Sigmoid colon (tissue), 7 donors: ENCODE measurements at regions of chr1 and their contacts with region 1.

Region 1: DNA sequence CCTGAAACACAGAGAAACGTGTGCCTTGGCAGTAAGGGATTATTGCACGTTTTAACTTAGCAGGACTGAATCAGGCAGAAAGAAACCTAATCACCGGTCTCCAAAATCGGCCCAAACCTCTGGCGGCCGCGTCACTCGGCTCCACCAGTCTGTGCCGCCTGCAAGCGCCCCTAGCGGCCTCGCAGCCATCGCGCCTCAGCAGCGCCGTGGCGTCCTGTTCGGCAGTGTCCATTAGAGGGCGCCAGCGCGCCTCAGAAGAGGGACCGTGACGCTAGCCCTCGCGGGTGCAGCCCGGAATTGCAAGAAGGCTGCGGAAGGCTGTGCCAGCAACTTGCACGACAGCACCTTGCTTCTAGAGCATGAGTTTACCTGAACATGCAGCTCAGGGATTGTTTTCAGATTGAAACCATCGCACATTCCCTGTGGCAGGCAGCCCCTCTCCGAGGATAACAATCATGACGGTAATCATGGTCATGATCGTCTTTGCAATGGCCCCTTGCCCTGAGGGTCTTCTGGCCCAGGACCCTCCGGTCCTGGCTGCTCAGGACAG is 164.4 kb downstream of the TRIM33 start:
- DNase-seq: peak; percentile 97
- H3K4me3 ChIP-seq: peak overlapping the region; percentile 38 to 53 (median 48)
- H3K27ac ChIP-seq: peak overlapping the region; percentile 82 to 85 (median 84)
- H3K4me1 ChIP-seq: peaks cover 0 to 13% (median 10%) of the 10 kb centered on the region in 4 donors
- H3K27me3 ChIP-seq: no peaks in the 10 kb centered on the region
- CTCF ChIP-seq: peak; percentile 100
- EP300 ChIP-seq: no peak
- POLR2A ChIP-seq: no peak

Region 2: GRCh38 chr1:114379987-114380386 is 33.4 kb after region 1 on chr1:
- intact Hi-C with region 1: loop called (anchors 5 kb)
- DNase-seq: no peak
- H3K4me3 ChIP-seq: no peak overlapping the region
- H3K27ac ChIP-seq: no peak overlapping the region
- H3K4me1 ChIP-seq: no peaks in the 10 kb centered on the region
- H3K27me3 ChIP-seq: no peaks in the 10 kb centered on the region
- CTCF ChIP-seq: no peak
- EP300 ChIP-seq: no peak
- POLR2A ChIP-seq: no peak

Region 3: GRCh38 chr1:114428083-114428749 is 81.7 kb after region 1 on chr1:
- intact Hi-C with region 1: loop called (anchors 1 kb)
- DNase-seq: no peak
- H3K4me3 ChIP-seq: no peak overlapping the region
- H3K27ac ChIP-seq: no peak overlapping the region
- H3K4me1 ChIP-seq: peaks cover 0 to 38% (median 9%) of the 10 kb centered on the region in 4 donors
- H3K27me3 ChIP-seq: no peaks in the 10 kb centered on the region
- CTCF ChIP-seq: peak in 2 of 4 experiments; percentile 12 to 43
- EP300 ChIP-seq: no peak
- POLR2A ChIP-seq: no peak

Region 4: GRCh38 chr1:114511032-114511785 is 164.7 kb after region 1 on chr1 and contains the start of gene TRIM33:
- intact Hi-C with region 1: loop called (anchors 1 kb)
- DNase-seq: peak; percentile 94
- H3K4me3 ChIP-seq: peak within 1 kb of the TSS; percentile 85 to 96 (median 86)
- H3K27ac ChIP-seq: peak within 1 kb of the TSS; percentile 88 to 98 (median 98)
- H3K4me1 ChIP-seq: peaks cover 0 to 40% (median 32%) of the 10 kb centered on the region in 4 donors
- H3K27me3 ChIP-seq: no peaks in the 10 kb centered on the region
- CTCF ChIP-seq: no peak
- EP300 ChIP-seq: peak in 1 of 4 donors; percentile 31
- POLR2A ChIP-seq: peak; percentile 57 to 77
- total RNA-seq, gene TRIM33: 38.7 to 42.0 (median 41.5) TPM

Region 5: GRCh38 chr1:115021154-115021553 is 674.6 kb after region 1 on chr1:
- intact Hi-C with region 1: no loop called
- DNase-seq: no peak
- H3K4me3 ChIP-seq: no peak overlapping the region
- H3K27ac ChIP-seq: no peak overlapping the region
- H3K4me1 ChIP-seq: no peaks in the 10 kb centered on the region
- H3K27me3 ChIP-seq: no peaks in the 10 kb centered on the region
- CTCF ChIP-seq: no peak
- EP300 ChIP-seq: no peak
- POLR2A ChIP-seq: no peak